ENCODE measurements at regions of chr7 and their contacts with region 1.

Region 1: GRCh38 chr7:43054052-43054722 is 58.3 kb upstream of the HECW1 start:
- DNase-seq: no peak
- H3K4me3 ChIP-seq: no peak overlapping the region
- H3K27ac ChIP-seq: no peak overlapping the region
- H3K4me1 ChIP-seq: no peaks in the 10 kb centered on the region
- H3K27me3 ChIP-seq: no peaks in the 10 kb centered on the region
- CTCF ChIP-seq: no peak
- EP300 ChIP-seq: no peak
- POLR2A ChIP-seq: no peak

Region 2: DNA sequence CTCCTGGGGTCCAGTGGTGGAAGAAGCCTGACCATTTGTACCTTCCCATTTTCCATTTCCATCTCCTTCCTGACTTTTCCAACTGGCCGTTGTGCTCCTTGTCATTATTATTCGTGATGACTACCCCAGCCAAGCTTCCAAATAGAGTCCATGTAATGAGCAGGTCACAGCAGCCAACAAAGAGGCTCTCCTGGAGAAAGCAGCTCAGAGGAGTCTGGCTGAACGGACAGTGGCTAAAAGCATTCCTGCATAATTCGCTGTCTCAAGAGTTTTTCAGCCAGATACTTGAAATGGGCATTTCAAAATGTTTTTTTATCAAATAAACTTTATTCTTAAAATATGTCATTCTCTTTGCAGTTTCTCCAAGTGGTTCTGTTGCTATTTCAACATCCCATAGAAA is 1809.9 kb before region 1 on chr7:
- intact Hi-C with region 1: loop called in 1 of 4 experiments (anchors 5 kb)
- DNase-seq: no peak
- H3K4me3 ChIP-seq: no peak overlapping the region
- H3K27ac ChIP-seq: no peak overlapping the region
- H3K4me1 ChIP-seq: no peaks in the 10 kb centered on the region
- H3K27me3 ChIP-seq: no peaks in the 10 kb centered on the region
- CTCF ChIP-seq: no peak
- EP300 ChIP-seq: no peak
- POLR2A ChIP-seq: no peak